AG04449 (cell line): ENCODE measurements at regions of chr3 and their contacts with region 1.

Region 1: GRCh38 chr3:69161587-69162307 is 39.4 kb upstream of the LMOD3 start:
- DNase-seq: no peak
- H3K4me3 ChIP-seq: no peak overlapping the region
- CTCF ChIP-seq: peak; percentile 71

Region 2: GRCh38 chr3:68504201-68504600 is 657.5 kb before region 1 on chr3:
- CTCF ChIA-PET with region 1: no interaction called
- POLR2A ChIA-PET with region 1: no interaction called
- DNase-seq: no peak
- H3K4me3 ChIP-seq: no peak overlapping the region
- CTCF ChIP-seq: no peak

Region 3: GRCh38 chr3:68996356-68996995 is 165.3 kb before region 1 on chr3:
- CTCF ChIA-PET with region 1: no interaction called
- POLR2A ChIA-PET with region 1: no interaction called
- DNase-seq: no peak
- H3K4me3 ChIP-seq: no peak overlapping the region
- CTCF ChIP-seq: no peak

Region 4: GRCh38 chr3:69144631-69145245 is 17.0 kb before region 1 on chr3:
- CTCF ChIA-PET with region 1: interaction called, 10 read pairs
- POLR2A ChIA-PET with region 1: no interaction called
- DNase-seq: no peak
- H3K4me3 ChIP-seq: no peak overlapping the region
- CTCF ChIP-seq: no peak

Region 5: GRCh38 chr3:69294014-69294775 is 132.4 kb after region 1 on chr3:
- CTCF ChIA-PET with region 1: interaction called, 31 read pairs
- POLR2A ChIA-PET with region 1: no interaction called
- DNase-seq: peak; percentile 53
- H3K4me3 ChIP-seq: no peak overlapping the region
- CTCF ChIP-seq: no peak

Region 6: GRCh38 chr3:69353503-69353902 is 191.8 kb after region 1 on chr3:
- CTCF ChIA-PET with region 1: no interaction called
- POLR2A ChIA-PET with region 1: no interaction called
- DNase-seq: no peak
- H3K4me3 ChIP-seq: no peak overlapping the region
- CTCF ChIP-seq: no peak

Region 7: GRCh38 chr3:69385723-69386555 is 224.2 kb after region 1 on chr3 and contains the start of gene FRMD4B:
- CTCF ChIA-PET with region 1: interaction called, 10 read pairs
- POLR2A ChIA-PET with region 1: no interaction called
- DNase-seq: no peak
- H3K4me3 ChIP-seq: peak within 1 kb of the TSS; percentile 64
- CTCF ChIP-seq: peak; percentile 55

Region 8: GRCh38 chr3:69433969-69434325 is 272.2 kb after region 1 on chr3:
- CTCF ChIA-PET with region 1: interaction called, 254 read pairs
- POLR2A ChIA-PET with region 1: no interaction called
- DNase-seq: no peak
- H3K4me3 ChIP-seq: no peak overlapping the region
- CTCF ChIP-seq: no peak

Region 9: GRCh38 chr3:69594286-69594685 is 432.5 kb after region 1 on chr3:
- CTCF ChIA-PET with region 1: no interaction called
- POLR2A ChIA-PET with region 1: no interaction called
- DNase-seq: no peak
- H3K4me3 ChIP-seq: no peak overlapping the region
- CTCF ChIP-seq: no peak